CD8-positive, alpha-beta T cell (primary cell): ENCODE measurements at regions of chr12 and their contacts with region 1.

Region 1: GRCh38 chr12:49088190-49088931 is 6.2 kb downstream of the DHH start:
- DNase-seq: peak; percentile 19 to 89 (median 70)
- ATAC-seq: peak; percentile 88
- H3K4me3 ChIP-seq: no peak overlapping the region
- H3K4me3 Mint-ChIP-seq: no peak overlapping the region
- H3K27ac ChIP-seq: no peak overlapping the region
- H3K27ac Mint-ChIP-seq: no peak overlapping the region
- H3K4me1 ChIP-seq: peaks cover 45% of the 10 kb centered on the region
- H3K4me1 Mint-ChIP-seq: peaks cover 36% of the 10 kb centered on the region
- H3K27me3 ChIP-seq: peaks cover 45 to 47% of the 10 kb centered on the region in 2 experiments
- H3K27me3 Mint-ChIP-seq: peaks cover 44% of the 10 kb centered on the region
- CTCF ChIP-seq: peak; percentile 79

Region 2: GRCh38 chr12:47610686-47611252 is 1477.6 kb before region 1 on chr12:
- CTCF ChIA-PET with region 1: no interaction called
- POLR2A ChIA-PET with region 1: no interaction called
- intact Hi-C with region 1: no loop called
- DNase-seq: no peak
- ATAC-seq: no peak
- H3K4me3 ChIP-seq: no peak overlapping the region
- H3K4me3 Mint-ChIP-seq: no peak overlapping the region
- H3K27ac ChIP-seq: no peak overlapping the region
- H3K27ac Mint-ChIP-seq: no peak overlapping the region
- H3K4me1 ChIP-seq: no peaks in the 10 kb centered on the region
- H3K4me1 Mint-ChIP-seq: no peaks in the 10 kb centered on the region
- H3K27me3 ChIP-seq: no peaks in the 10 kb centered on the region
- H3K27me3 Mint-ChIP-seq: no peaks in the 10 kb centered on the region
- CTCF ChIP-seq: no peak

Region 3: GRCh38 chr12:48631057-48631456 is 457.3 kb before region 1 on chr12:
- CTCF ChIA-PET with region 1: no interaction called
- POLR2A ChIA-PET with region 1: no interaction called
- intact Hi-C with region 1: no loop called
- DNase-seq: no peak
- ATAC-seq: no peak
- H3K4me3 ChIP-seq: no peak overlapping the region
- H3K4me3 Mint-ChIP-seq: no peak overlapping the region
- H3K27ac ChIP-seq: no peak overlapping the region
- H3K27ac Mint-ChIP-seq: no peak overlapping the region
- H3K4me1 ChIP-seq: no peaks in the 10 kb centered on the region
- H3K4me1 Mint-ChIP-seq: no peaks in the 10 kb centered on the region
- H3K27me3 ChIP-seq: no peaks in the 10 kb centered on the region
- H3K27me3 Mint-ChIP-seq: peaks cover 21% of the 10 kb centered on the region
- CTCF ChIP-seq: no peak

Region 4: DNA sequence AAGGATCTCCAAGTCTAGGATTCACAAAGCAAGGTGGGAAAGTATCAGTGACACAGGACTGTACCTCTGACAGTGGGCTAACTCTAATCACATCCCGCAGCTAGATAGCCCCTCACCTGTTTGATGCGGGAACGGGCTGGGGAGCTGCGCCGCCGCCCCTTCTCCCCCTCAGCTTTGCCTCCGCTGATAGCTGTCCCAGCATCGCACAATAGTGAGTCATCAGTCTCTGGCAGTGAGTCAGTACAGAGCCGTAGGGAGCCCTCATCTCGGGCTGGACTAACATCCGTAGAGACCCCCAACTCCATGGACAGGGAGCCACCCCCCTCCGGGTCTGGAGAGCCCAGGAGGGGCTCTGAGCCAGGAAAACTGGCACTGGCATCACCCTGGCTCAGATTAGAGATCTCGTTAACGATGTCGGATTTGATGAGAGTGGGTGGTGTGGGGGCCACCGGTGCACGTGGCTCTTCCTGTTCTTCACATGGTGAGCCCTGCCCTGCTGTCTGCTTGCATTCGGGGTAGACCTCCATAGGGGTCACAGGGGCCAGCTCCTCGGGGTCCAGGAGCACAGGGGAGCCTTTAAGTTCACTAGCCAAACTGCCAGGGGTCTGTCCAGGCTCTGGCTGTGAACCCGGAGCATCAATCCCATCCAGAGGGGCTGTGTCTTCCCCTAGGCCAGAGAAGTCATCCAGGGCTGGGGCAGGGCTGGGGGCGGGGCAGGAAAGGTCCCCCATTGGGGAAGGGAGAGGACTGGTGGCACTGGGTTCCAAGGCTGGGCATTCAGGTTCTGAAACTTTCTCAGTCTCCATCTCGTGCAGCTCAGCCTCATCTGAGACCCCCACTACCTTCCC is 38.6 kb before region 1 on chr12:
- CTCF ChIA-PET with region 1: interaction called, 10 read pairs
- POLR2A ChIA-PET with region 1: no interaction called
- intact Hi-C with region 1: no loop called
- DNase-seq: no peak
- ATAC-seq: no peak
- H3K4me3 ChIP-seq: no peak overlapping the region
- H3K4me3 Mint-ChIP-seq: no peak overlapping the region
- H3K27ac ChIP-seq: no peak overlapping the region
- H3K27ac Mint-ChIP-seq: no peak overlapping the region
- H3K4me1 ChIP-seq: peaks cover under 1% of the 10 kb centered on the region
- H3K4me1 Mint-ChIP-seq: peaks cover 10% of the 10 kb centered on the region
- H3K27me3 ChIP-seq: no peaks in the 10 kb centered on the region
- H3K27me3 Mint-ChIP-seq: no peaks in the 10 kb centered on the region
- CTCF ChIP-seq: no peak

Region 5: GRCh38 chr12:49105608-49106007 is 17.2 kb after region 1 on chr12:
- CTCF ChIA-PET with region 1: interaction called, 153 read pairs
- POLR2A ChIA-PET with region 1: interaction called, 9 read pairs
- intact Hi-C with region 1: loop called in 1 of 2 experiments (anchors 2 kb)
- DNase-seq: no peak
- ATAC-seq: no peak
- H3K4me3 ChIP-seq: no peak overlapping the region
- H3K4me3 Mint-ChIP-seq: no peak overlapping the region
- H3K27ac ChIP-seq: no peak overlapping the region
- H3K27ac Mint-ChIP-seq: no peak overlapping the region
- H3K4me1 ChIP-seq: peaks cover 12% of the 10 kb centered on the region
- H3K4me1 Mint-ChIP-seq: peaks cover 40% of the 10 kb centered on the region
- H3K27me3 ChIP-seq: no peaks in the 10 kb centered on the region
- H3K27me3 Mint-ChIP-seq: no peaks in the 10 kb centered on the region
- CTCF ChIP-seq: no peak

Region 6: DNA sequence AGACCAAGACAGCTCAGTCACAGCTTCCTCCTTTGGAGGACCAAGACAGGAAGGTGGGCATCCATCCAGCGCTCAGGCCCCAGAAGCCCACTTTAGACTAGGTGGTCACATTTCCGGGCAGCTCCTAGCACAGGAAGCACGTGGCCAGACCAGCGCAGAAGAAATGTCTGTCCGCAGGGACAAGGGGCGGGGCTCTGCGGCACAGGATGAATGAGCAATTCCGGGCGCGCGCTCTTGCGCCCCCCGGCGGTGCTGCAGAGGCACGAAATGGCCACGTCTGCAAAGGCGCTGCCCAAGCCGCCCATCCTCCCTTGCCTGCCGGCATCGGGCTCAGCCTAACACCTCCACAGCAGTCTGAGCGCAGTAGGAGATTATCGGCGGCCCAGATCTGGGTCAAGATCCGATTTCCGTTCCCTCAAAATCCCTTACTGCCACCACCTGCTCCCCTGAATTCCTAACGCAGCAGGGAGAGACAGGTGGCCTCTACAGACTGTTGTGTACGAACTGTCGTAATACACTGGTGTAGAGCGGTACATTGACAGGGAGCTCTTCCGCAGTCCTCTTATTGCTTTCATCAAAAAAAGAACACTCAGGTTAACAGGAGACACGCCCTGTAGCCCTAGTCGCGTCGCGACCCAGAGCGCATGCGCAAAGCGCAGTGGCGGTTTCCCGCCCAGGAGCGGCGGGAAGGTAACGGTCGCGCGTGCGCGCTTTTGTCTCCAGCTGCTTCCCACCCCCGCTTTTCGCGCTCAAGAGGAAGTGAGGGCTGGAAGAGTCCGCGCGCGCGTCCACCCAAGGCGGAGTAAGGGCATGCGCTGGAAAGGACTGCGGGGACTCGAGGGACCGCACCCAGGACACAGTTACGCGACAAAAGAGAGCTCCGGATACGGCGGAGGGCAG is 42.0 kb after region 1 on chr12:
- CTCF ChIA-PET with region 1: interaction called, 55 read pairs
- POLR2A ChIA-PET with region 1: interaction called, 13 read pairs
- intact Hi-C with region 1: loop called (anchors 1 kb)
- DNase-seq: peak; percentile 78 to 97 (median 92)
- ATAC-seq: peak; percentile 67
- H3K4me3 ChIP-seq: peak overlapping the region; percentile 88 to 91
- H3K4me3 Mint-ChIP-seq: peak overlapping the region; percentile 96
- H3K27ac ChIP-seq: peak overlapping the region; percentile 90 to 96
- H3K27ac Mint-ChIP-seq: peak overlapping the region; percentile 99
- H3K4me1 ChIP-seq: peaks cover 25% of the 10 kb centered on the region
- H3K4me1 Mint-ChIP-seq: peaks cover 47% of the 10 kb centered on the region
- H3K27me3 ChIP-seq: no peaks in the 10 kb centered on the region
- H3K27me3 Mint-ChIP-seq: no peaks in the 10 kb centered on the region
- CTCF ChIP-seq: peak; percentile 96

Region 7: DNA sequence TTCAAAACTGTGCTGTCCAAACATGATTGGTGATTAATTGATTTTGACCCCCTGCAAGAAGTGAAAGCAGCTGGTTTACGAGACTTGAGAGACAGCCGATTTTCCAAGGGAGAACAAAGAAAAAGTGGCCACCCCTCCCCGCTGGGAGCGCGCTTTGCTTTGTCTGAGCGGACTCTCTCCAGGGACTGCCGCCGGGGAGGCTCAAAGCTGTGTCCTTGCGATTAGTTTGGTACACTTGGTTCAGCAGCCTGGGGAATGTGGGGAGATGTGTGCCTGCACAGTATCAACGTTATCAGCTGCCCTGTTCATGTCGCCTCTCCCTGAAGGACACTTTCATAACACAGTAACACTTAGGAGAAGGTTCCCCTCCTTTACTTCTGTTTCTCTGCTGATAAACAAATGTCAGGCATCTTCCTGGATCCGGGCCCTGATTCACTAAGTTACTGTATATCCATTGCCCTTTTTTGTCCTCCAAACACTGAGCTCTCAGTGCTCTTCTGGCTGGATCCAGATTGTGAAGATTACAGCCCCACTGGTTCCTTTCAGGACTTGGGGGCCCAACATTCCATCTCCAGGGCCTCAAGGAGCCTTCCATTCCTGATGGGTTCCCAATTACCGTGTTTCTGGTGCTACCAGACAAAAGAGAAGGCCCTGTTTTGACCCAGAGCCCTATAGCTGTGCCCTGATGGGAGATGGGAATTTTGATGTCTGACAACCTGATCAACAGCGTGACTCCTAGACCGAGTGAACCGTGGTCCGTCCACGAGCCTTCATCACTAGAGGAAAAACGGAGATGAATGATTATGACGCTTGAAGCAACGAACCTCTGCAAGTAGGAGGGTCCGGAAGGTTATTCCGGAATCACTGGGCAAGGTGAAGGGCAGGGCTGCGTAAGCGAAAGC is 144.8 kb after region 1 on chr12:
- CTCF ChIA-PET with region 1: interaction called, 38 read pairs
- POLR2A ChIA-PET with region 1: interaction called, 4 read pairs
- intact Hi-C with region 1: loop called (anchors 1 kb)
- DNase-seq: peak in 1 of 9 experiments; percentile 13
- ATAC-seq: no peak
- H3K4me3 ChIP-seq: no peak overlapping the region
- H3K4me3 Mint-ChIP-seq: peak overlapping the region; percentile 69
- H3K27ac ChIP-seq: no peak overlapping the region
- H3K27ac Mint-ChIP-seq: no peak overlapping the region
- H3K4me1 ChIP-seq: peaks cover 8% of the 10 kb centered on the region
- H3K4me1 Mint-ChIP-seq: peaks cover 10% of the 10 kb centered on the region
- H3K27me3 ChIP-seq: no peaks in the 10 kb centered on the region
- H3K27me3 Mint-ChIP-seq: no peaks in the 10 kb centered on the region
- CTCF ChIP-seq: no peak